Mucosa of descending colon (tissue), 3 donors: ENCODE measurements at regions of chr11 and their contacts with region 1.

Region 1: DNA sequence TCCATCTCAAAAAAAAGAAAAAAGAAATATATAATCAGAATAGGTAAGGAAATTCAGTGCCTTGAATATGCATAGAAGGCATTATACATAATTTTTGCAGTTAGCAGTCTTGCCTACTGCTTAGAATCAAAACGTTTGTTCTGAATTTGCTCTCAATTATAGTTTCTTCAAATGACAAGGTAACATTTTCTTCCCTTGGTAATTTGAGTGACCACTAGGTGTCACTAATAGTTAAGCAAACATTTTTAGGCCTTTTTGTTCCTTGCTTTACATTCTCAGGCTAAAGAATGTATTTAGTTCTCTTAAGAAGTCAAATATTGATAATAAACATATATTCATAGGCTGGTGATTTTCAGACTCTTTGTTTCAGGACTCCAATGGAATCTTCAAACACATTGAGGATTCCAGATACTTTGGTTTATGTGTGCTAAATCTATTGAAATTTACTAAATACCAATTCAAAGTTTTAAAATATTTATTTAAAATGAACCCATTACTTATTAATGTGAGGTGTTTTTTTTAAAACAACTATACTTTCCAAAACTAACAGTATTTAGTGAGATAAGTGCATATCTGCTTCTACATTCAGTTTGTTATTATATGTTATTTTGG is 55.0 kb upstream of the DEPDC7 start:
- DNase-seq: no peak
- ATAC-seq: peak; percentile 64
- H3K4me3 ChIP-seq: no peak overlapping the region
- H3K4me1 ChIP-seq: no peaks in the 10 kb centered on the region
- CTCF ChIP-seq: peak; percentile 26

Region 2: GRCh38 chr11:33065445-33066178 is 105.0 kb after region 1 on chr11:
- intact Hi-C with region 1: loop called (anchors 5 kb)
- DNase-seq: peak; percentile 69 to 85 (median 83)
- ATAC-seq: peak; percentile 70
- H3K4me3 ChIP-seq: no peak overlapping the region
- H3K4me1 ChIP-seq: peaks cover 4% of the 10 kb centered on the region
- CTCF ChIP-seq: peak; percentile 79

Region 3: GRCh38 chr11:33116535-33116934 is 155.9 kb after region 1 on chr11:
- intact Hi-C with region 1: no loop called
- DNase-seq: no peak
- ATAC-seq: peak; percentile 44
- H3K4me3 ChIP-seq: no peak overlapping the region
- H3K4me1 ChIP-seq: no peaks in the 10 kb centered on the region
- CTCF ChIP-seq: no peak